Head of caudate nucleus (tissue), 42 donors: ENCODE measurements at regions of chr3 and their contacts with region 1.

Region 1: GRCh38 chr3:151468284-151468917 is 7.5 kb upstream of the IGSF10 start:
- DNase-seq: peak in 22 of 42 donors; percentile 6 to 71 (median 42)

Region 2: DNA sequence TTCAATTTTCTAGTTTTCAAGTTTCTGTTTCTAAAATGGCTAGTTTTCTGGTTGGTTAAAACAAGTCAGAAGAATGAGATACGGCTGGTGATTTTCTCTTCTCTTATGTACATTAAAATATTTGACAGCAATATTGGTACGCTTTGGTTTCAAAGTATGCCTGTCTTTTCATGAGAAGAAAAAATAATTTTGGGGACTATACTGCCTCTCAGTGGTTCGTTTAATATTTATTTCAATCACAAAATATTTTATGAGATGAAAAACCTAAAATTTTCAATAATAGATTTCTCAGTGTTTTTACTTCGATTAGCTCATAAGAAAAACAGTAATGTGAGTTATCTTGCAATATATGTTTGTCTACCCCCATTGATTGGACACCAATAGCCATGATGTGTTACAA is 192.5 kb after region 1 on chr3:
- intact Hi-C with region 1: loop called (anchors 10 kb)
- DNase-seq: no peak

Region 3: GRCh38 chr3:151912028-151912427 is 443.6 kb after region 1 on chr3:
- intact Hi-C with region 1: no loop called
- DNase-seq: no peak